ENCODE measurements at regions of chr22 and their contacts with region 1.

Region 1: DNA sequence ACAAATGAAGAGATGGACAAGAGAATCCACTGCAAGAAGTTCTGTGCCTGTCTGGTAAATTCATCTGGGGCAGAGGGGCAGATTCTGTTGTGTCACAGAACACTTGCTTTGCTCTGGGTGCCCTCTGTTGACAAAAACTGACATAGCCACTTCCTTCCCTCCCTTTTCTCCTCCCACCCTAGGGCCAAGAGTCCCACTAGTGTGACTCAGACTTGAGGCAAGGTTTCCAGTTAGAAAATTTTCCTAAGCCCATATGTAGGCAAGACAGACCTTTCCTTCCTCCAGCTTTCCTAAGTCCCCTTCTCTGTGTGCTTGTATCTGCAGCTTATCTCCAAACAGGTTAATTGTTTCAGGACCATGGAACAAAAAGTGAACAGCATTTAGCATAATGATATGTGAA is 106.8 kb downstream of the RBFOX2 start:
- DNase-seq: peak; percentile 30 to 58
- ATAC-seq: peak; percentile 92 to 96 (median 94)
- H3K4me3 ChIP-seq: no peak overlapping the region
- H3K27ac ChIP-seq: peak overlapping the region; percentile 75
- H3K4me1 ChIP-seq: peaks cover 47% of the 10 kb centered on the region
- H3K27me3 ChIP-seq: no peaks in the 10 kb centered on the region
- CTCF ChIP-seq: peak; percentile 62

Region 2: DNA sequence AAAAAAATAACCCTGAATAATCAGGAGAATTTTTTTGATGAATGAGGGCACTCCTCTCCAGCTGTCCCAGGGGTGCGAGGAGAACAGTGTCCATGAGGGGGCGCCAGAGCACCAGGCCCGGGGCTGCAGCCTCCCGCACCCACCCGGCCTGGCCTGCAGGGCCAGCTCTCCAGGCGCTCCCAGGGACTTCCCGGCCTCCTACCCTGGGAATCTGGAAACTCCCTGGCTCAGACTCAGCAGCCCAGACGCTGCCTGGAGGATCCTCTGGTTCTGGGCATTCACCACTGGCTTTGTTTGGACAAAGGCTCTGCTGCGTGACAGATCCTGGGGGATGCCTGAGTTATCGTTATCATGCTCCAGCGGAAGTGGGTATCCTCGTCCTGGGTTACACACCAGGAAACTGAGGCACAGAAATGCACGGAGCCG is 490.9 kb before region 1 on chr22:
- intact Hi-C with region 1: loop called in 1 of 2 experiments (anchors 5 kb)
- DNase-seq: peak; percentile 88 to 92
- ATAC-seq: peak; percentile 95 to 98 (median 96)
- H3K4me3 ChIP-seq: no peak overlapping the region
- H3K27ac ChIP-seq: no peak overlapping the region
- H3K4me1 ChIP-seq: peaks cover 24% of the 10 kb centered on the region
- H3K27me3 ChIP-seq: no peaks in the 10 kb centered on the region
- CTCF ChIP-seq: peak; percentile 96

Region 3: GRCh38 chr22:35622191-35622913 is 299.4 kb before region 1 on chr22:
- intact Hi-C with region 1: loop called (anchors 1 to 5 kb)
- DNase-seq: peak; percentile 79 to 90
- ATAC-seq: peak; percentile 77 to 84 (median 79)
- H3K4me3 ChIP-seq: peak overlapping the region; percentile 58
- H3K27ac ChIP-seq: peak overlapping the region; percentile 93
- H3K4me1 ChIP-seq: peaks cover 51% of the 10 kb centered on the region
- H3K27me3 ChIP-seq: no peaks in the 10 kb centered on the region
- CTCF ChIP-seq: no peak

Region 4: GRCh38 chr22:35684270-35684700 is 237.5 kb before region 1 on chr22:
- intact Hi-C with region 1: loop called (anchors 2 to 10 kb)
- DNase-seq: no peak
- ATAC-seq: peak; percentile 91 to 98 (median 96)
- H3K4me3 ChIP-seq: no peak overlapping the region
- H3K27ac ChIP-seq: peak overlapping the region; percentile 92
- H3K4me1 ChIP-seq: peaks cover 19% of the 10 kb centered on the region
- H3K27me3 ChIP-seq: no peaks in the 10 kb centered on the region
- CTCF ChIP-seq: peak; percentile 31

Region 5: GRCh38 chr22:35761037-35761436 is 160.7 kb before region 1 on chr22:
- intact Hi-C with region 1: loop called (anchors 5 kb)
- DNase-seq: no peak
- ATAC-seq: peak in 2 of 4 donors; percentile 80 to 81
- H3K4me3 ChIP-seq: no peak overlapping the region
- H3K27ac ChIP-seq: no peak overlapping the region
- H3K4me1 ChIP-seq: peaks cover 7% of the 10 kb centered on the region
- H3K27me3 ChIP-seq: no peaks in the 10 kb centered on the region
- CTCF ChIP-seq: peak; percentile 32